Vagina (tissue), 2 donors: ENCODE measurements at regions of chr17 and their contacts with region 1.

Region 1: GRCh38 chr17:78865682-78866390 is 25.2 kb upstream of the USP36 start:
- DNase-seq: no peak
- H3K4me3 ChIP-seq: no peak overlapping the region
- H3K27ac ChIP-seq: peak overlapping the region; percentile 92
- H3K4me1 ChIP-seq: peaks cover 27% of the 10 kb centered on the region
- H3K27me3 ChIP-seq: no peaks in the 10 kb centered on the region
- CTCF ChIP-seq: peak; percentile 69 to 91 (median 75)
- POLR2A ChIP-seq: no peak

Region 2: DNA sequence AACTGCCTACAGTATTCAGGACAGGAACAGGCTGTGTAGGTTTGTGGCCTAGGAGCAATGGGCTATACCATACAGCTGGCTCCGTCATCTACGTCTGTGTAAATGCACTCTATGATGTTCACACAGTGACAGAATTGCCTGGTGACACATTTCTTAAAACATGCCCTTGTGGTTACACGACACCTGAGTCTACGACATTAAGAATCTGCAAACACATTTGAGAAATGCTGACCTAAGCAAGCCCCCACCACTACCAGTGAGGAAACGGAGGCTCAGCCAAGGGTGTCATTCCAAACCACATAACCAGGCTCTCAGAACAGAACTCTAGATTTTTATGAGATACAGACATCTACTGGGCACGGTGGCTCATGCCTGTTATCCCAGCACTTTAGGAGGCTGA is 48.7 kb before region 1 on chr17:
- intact Hi-C with region 1: no loop called
- DNase-seq: no peak
- H3K4me3 ChIP-seq: no peak overlapping the region
- H3K27ac ChIP-seq: peak overlapping the region; percentile 70
- H3K4me1 ChIP-seq: peaks cover 4% of the 10 kb centered on the region
- H3K27me3 ChIP-seq: no peaks in the 10 kb centered on the region
- CTCF ChIP-seq: no peak
- POLR2A ChIP-seq: no peak

Region 3: DNA sequence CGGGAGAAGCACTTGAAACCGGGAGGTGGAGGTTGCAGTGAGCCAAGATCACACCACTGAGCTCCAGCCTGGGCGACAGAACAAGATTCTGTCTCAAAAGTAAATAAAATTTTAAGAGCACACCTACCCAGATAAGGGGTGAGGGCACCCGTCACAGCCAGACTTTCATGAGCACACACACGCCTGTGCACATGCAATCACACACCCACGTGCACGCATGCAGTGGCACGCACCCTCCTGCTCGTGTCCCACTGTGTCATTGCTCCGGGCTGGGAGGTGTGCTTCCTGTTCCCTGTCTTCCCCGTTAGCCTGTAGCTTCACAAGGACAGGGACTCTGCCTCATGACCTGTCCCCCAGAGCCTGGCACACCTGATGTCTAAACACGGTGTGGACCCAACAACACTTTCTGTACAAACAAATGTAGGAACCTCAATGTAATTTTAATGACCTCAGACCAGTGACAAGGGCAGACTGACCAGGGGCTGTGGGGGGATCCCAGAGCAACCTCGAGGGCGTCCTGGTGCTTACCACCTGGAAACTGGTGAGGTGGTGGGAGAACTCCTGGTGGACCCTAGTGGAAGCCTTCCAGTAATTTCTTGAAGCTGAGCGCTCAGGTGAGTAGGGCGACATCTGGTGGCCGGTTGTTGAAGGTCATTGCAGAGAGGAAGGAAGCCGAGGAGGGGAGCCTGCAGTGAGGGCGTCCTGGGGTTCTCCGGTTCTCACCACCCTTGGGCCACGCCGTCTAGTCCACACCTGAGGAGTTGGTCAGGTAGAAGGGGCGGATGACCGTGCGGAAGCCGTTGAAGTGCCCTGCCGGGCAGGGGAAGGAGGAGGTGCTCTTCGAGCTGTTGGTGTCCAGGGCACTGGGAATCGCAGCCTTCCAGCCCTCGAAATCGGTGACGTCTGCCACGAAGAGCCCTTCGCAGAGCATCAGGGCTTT is 105.3 kb after region 1 on chr17:
- intact Hi-C with region 1: loop called (anchors 5 kb)
- DNase-seq: no peak
- H3K4me3 ChIP-seq: no peak overlapping the region
- H3K27ac ChIP-seq: peak overlapping the region; percentile 89
- H3K4me1 ChIP-seq: peaks cover 50% of the 10 kb centered on the region
- H3K27me3 ChIP-seq: no peaks in the 10 kb centered on the region
- CTCF ChIP-seq: peak; percentile 78 to 95 (median 92)
- POLR2A ChIP-seq: no peak

Region 4: DNA sequence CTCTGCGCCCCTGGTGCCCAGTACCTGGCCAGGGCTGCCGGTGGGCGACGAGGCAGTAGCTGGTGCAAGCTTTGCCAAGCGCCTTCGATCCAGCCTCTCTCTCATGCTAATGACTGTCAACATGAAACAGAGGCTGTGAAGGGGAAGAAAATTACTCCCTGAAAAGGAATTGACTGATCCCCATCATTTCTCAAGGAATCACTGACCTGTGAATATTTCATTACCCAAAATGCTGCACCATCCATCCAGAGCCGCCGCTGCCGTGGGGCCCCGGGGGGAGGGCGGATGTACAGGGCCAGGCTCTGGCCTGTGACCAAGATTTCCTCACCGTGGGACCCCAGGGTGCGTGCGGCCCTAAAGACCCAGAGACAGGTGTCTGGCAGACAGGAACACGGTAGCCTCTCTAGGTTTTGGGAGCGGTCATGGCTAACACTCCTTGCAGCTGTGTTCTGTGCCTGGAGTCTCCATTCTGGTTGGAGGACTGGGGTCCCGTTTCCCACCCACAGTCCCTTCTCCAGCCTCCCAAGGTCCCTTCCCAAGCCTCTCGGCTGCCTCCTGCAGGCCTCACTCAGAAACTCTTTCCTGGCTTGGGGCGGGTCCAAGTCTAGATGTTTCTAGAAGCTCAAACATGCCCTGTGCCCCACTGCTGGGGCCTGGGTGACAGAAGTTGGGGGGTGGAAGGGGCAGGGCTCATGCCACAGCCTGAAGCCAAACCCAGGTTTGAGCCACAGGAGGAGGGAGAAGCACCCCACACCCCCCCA is 282.1 kb after region 1 on chr17:
- intact Hi-C with region 1: no loop called
- DNase-seq: no peak
- H3K4me3 ChIP-seq: no peak overlapping the region
- H3K27ac ChIP-seq: no peak overlapping the region
- H3K4me1 ChIP-seq: no peaks in the 10 kb centered on the region
- H3K27me3 ChIP-seq: no peaks in the 10 kb centered on the region
- CTCF ChIP-seq: no peak
- POLR2A ChIP-seq: no peak